Cardiac septum (tissue), 1 donor: ENCODE measurements at regions of chr10 and their contacts with region 1.

Region 1: GRCh38 chr10:58334817-58335305 is at the start of gene UBE2D1:
- DNase-seq: peak; percentile 97
- total RNA-seq, gene UBE2D1: 34.7 TPM

Region 2: GRCh38 chr10:58267713-58268453 is 67.0 kb before region 1 on chr10 and contains the start of gene IPMK:
- intact Hi-C with region 1: loop called (anchors 2 kb)
- DNase-seq: peak; percentile 97
- total RNA-seq, gene IPMK: 3.0 TPM

Region 3: DNA sequence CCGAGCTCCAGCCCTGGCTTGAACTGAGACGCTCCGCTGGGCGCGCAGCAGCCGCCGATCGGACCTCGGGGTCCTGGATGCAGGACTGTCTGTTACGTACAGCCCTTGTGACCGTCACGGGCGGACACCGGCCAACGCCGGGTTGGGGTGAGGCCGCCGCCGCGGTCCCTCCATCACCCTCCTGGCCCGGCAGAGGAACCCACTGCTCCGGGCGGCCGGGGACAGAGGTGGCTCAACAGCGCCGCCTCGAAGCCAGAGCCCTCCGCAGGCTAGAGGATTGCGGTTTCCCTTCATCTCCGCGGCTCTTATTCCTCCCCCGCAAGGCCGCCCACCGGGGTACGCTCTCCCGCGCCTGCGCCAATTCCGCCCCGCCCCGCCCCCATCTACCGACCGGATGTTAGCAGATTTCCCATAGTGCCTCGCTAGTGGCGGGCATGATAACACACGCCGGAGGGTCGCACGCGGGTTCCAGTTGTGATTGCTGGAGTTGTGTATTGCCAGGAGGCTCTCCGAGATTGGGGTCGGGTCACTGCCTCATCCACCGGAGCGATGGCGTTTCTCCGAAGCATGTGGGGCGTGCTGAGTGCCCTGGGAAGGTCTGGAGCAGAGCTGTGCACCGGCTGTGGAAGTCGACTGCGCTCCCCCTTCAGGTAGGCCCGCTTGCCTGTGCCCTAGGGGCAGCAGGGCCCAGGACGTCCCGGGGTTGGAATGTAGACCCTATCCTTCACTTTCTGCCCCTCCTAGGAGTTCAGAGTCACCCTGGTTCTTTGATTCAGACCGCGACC is 50.3 kb after region 1 on chr10 and contains the start of gene TFAM:
- intact Hi-C with region 1: loop called (anchors 1 kb)
- DNase-seq: peak; percentile 98
- total RNA-seq, gene TFAM: 29.4 TPM